Mammary epithelial cell (primary cell): ENCODE measurements at regions of chr17 and their contacts with region 1.

Region 1: DNA sequence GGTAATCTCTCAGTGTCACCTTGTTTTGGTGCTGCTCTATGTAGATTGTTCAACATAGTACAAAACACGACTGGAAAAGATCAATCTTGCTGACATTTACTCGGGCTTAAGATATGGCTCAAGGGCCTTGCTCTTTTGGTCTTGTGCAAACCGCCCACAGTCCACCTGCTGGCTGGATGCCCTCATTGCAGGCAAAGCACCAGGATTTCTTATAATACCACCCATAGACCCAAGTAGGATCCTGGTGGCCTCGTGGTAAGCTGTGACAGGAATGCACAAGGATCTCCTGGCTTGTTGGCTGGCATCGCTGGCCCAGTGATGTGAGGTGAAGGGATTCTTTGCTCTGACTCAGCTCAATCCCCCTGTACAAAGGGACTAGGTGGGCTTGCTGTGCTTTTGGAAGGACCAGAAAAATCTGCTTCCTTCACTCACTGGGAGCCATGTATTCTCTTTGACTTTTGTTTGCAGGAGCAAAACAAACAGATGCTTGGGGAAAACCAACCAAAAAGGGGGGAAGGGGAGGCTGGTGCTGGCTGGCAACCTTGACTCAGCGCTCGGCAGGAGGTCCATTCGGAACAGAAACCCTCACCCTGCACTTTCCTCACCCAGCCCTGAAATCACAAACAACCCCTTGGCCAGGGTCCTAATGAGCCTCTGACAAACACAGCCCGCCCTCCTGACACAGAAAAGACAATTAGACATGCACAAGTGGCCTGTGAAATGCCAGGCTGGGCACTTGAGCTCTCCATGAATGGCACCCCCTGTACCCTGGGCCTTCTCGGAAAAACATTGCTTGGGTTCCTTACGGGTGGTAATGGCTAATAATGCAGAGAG is 36.6 kb upstream of the MED9 start:
- DNase-seq: peak; percentile 23
- H3K4me3 ChIP-seq: no peak overlapping the region
- H3K27ac ChIP-seq: no peak overlapping the region
- H3K4me1 ChIP-seq: no peaks in the 10 kb centered on the region
- H3K27me3 ChIP-seq: no peaks in the 10 kb centered on the region
- CTCF ChIP-seq: peak; percentile 70 to 82

Region 2: DNA sequence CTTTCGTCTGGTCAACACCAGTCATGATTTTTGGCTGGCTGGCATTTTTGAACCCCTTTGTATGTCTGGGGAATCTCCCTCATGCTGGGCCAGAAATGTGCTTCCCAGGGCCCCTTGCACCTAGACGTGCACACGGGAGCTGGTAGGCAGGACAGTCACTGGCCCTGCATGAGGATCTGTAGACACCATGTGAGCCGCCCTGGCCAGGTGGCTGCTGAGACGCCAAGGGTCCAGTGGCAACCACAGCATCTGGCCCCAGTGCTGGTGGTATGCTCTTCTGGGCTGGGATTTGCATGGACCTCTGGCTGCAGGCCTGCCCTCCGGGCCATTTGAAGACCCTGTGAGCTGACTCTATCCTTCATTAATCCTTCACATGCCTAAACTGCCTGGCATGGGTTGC is 69.5 kb before region 1 on chr17:
- CTCF ChIA-PET with region 1: no interaction called
- dilution Hi-C with region 1: loop called (anchors 5 kb)
- in situ Hi-C with region 1: no loop called
- intact Hi-C with region 1: no loop called
- DNase-seq: no peak
- H3K4me3 ChIP-seq: no peak overlapping the region
- H3K27ac ChIP-seq: no peak overlapping the region
- H3K4me1 ChIP-seq: no peaks in the 10 kb centered on the region
- H3K27me3 ChIP-seq: no peaks in the 10 kb centered on the region
- CTCF ChIP-seq: no peak